MCF 10A (cell line): ENCODE measurements at regions of chr9 and their contacts with region 1.

Region 1: DNA sequence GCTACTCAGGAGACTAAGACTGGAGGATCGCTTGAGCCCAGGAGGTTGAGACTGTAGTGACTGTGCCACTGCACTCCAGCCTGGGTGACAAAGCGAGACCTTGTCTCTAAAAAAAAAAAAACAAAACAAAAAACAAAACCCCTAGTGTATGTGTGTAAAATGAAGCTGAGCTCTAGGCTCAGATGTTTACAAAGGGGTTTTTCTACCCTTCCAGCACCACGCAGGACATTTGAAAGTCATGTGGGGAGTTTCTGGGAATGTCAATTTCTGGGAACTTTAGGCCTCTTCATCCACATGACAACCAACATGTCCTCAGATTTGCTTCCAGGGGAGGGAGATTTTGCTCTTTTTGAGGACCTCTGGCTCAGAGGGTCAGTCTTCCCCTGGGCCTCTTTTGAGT is 42.4 kb upstream of the AIF1L start:
- DNase-seq: no peak
- H3K4me3 Mint-ChIP-seq: no peak overlapping the region
- H3K27ac Mint-ChIP-seq: no peak overlapping the region
- H3K4me1 Mint-ChIP-seq: no peaks in the 10 kb centered on the region
- H3K27me3 Mint-ChIP-seq: no peaks in the 10 kb centered on the region
- CTCF ChIP-seq: no peak

Region 2: GRCh38 chr9:131111854-131112311 is 58.0 kb after region 1 on chr9:
- CTCF ChIA-PET with region 1: interaction called, 6 read pairs
- POLR2A ChIA-PET with region 1: no interaction called
- intact Hi-C with region 1: loop called (anchors 5 kb)
- DNase-seq: no peak
- H3K4me3 Mint-ChIP-seq: no peak overlapping the region
- H3K27ac Mint-ChIP-seq: no peak overlapping the region
- H3K4me1 Mint-ChIP-seq: peaks cover 6% of the 10 kb centered on the region
- H3K27me3 Mint-ChIP-seq: no peaks in the 10 kb centered on the region
- CTCF ChIP-seq: no peak